ENCODE measurements at regions of chr5 and their contacts with region 1.

Region 1: GRCh38 chr5:151288180-151288579 is 15.4 kb downstream of the SLC36A3 start:
- DNase-seq: peak; percentile 41
- ATAC-seq: peak; percentile 85
- H3K4me3 ChIP-seq: no peak overlapping the region
- H3K27ac ChIP-seq: no peak overlapping the region
- H3K4me1 ChIP-seq: peaks cover 4 to 5% of the 10 kb centered on the region in 2 experiments; a peak in 3 of 4 replicates
- H3K27me3 ChIP-seq: no peaks in the 10 kb centered on the region
- CTCF ChIP-seq: peak; percentile 43 to 65 (median 44)
- POLR2A ChIP-seq: no peak
- RAD21 ChIP-seq: peak; percentile 64

Region 2: DNA sequence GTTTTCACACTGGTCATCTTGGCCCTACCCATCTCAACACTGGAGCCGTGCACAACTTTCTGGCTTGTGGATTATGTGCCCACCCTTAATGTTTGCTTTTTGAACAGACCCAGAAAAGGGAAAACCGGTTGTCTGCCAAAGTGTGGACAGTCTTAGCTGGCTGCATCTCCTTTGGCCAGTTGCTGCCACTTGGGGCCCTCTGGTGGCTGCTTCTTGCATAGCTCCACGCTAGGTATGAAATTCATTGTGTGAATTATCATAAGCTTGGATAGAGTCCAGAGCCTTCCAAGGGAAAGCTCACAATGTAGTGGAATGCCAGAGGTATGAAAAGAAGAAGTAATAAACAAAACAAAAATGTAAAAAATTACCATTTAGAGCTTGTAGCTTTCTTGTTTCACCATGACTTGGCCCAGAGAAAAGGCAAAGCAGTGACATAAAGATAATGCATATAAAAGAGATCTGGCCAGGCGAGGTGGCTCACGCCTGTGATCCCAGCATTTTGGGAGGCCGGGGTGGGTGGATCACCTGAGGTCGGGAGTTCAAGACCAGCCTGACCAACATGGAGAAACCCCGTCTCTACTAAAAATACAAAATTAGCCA is 27.9 kb after region 1 on chr5:
- CTCF ChIA-PET with region 1: interaction called, 5 read pairs
- POLR2A ChIA-PET with region 1: interaction called, 3 read pairs
- RAD21 ChIA-PET with region 1: no interaction called
- intact Hi-C with region 1: loop called (anchors 1 kb)
- DNase-seq: peak; percentile 37
- ATAC-seq: peak; percentile 91
- H3K4me3 ChIP-seq: no peak overlapping the region
- H3K27ac ChIP-seq: no peak overlapping the region
- H3K4me1 ChIP-seq: no peaks in the 10 kb centered on the region
- H3K27me3 ChIP-seq: no peaks in the 10 kb centered on the region
- CTCF ChIP-seq: peak; percentile 86 to 95 (median 93)
- POLR2A ChIP-seq: no peak
- RAD21 ChIP-seq: peak; percentile 89